Posterior cingulate gyrus (tissue), 11 donors: ENCODE measurements at regions of chr1 and their contacts with region 1.

Region 1: DNA sequence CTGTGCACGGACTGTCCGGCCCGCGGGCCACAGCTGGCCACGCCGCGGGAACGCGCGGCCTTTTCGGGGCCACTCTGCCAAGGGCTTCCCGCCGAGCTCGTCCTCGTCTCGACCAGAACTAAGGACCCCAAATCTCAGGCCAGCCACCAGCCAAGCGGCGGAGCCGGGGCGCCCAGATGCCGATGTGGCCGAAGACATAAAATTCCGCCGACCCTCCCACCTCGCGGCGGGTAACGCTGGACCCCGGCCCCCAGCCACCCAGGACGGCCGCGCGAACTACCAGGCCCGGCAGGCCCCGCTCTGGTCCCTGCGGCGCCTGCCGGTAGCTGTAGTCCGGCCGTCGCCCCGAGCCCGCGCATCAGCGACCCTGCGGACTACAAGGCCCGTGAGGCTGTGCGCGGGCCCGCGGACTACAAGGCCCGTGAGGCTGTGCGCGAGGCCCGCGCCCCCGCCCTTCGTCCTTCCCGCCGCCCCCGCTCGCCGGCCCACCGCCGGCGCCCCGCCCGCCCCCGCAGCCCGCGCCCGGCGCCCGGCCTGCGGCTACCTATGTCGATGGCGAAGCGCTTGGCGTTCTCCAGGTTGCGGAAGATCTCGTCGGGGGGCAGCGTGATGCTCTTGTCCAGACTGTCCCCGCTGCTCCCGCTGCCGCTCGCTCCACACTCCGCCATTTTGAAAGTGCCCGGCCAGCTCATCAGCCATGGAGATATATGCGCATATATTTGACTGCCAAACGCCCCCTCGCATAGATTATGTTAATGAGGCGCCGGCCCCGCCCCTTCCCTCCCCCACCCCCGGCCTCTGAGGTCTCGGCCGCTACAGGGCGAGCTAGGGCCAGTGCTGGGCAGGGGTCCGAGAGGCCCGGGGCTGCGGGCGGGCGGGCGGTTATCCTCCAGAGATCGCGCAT is at the start of gene PANK4:
- DNase-seq: peak; percentile 84 to 99 (median 91)

Region 2: DNA sequence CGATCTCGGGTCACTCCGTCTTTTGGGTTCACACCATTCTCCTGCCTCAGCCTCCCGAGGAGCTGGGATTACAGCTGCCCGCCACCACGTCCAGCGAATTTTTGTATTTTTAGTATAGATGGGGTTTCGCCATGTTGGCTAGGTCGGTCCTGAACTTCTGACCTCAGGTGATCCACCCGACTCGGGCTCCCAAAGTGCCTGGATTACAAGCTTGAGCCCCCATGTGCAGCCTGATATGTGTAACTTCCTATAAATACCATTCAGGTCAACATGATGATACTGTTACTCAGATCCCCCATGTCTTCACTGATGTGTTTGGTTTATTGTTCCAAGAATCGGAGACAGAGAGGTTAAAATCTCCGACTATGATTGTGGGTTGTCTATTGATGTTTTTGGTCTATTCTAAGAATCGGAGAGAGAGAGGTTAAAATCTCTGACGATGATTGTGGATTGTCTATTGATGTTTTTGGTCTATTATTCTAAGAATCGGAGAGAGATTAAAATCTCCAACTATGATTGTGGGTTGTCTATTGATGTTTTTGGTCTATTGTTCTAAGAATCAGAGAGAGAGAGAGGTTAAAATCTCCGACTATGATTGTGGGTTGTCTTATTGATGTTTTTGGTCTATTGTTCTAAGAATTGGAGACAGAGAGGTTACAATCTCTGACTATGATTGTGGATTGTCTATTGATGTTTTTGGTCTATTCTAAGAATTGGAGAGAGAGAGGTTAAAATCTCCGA is 1427.3 kb before region 1 on chr1:
- intact Hi-C with region 1: no loop called
- DNase-seq: peak in 2 of 10 donors; percentile 17 to 27

Region 3: DNA sequence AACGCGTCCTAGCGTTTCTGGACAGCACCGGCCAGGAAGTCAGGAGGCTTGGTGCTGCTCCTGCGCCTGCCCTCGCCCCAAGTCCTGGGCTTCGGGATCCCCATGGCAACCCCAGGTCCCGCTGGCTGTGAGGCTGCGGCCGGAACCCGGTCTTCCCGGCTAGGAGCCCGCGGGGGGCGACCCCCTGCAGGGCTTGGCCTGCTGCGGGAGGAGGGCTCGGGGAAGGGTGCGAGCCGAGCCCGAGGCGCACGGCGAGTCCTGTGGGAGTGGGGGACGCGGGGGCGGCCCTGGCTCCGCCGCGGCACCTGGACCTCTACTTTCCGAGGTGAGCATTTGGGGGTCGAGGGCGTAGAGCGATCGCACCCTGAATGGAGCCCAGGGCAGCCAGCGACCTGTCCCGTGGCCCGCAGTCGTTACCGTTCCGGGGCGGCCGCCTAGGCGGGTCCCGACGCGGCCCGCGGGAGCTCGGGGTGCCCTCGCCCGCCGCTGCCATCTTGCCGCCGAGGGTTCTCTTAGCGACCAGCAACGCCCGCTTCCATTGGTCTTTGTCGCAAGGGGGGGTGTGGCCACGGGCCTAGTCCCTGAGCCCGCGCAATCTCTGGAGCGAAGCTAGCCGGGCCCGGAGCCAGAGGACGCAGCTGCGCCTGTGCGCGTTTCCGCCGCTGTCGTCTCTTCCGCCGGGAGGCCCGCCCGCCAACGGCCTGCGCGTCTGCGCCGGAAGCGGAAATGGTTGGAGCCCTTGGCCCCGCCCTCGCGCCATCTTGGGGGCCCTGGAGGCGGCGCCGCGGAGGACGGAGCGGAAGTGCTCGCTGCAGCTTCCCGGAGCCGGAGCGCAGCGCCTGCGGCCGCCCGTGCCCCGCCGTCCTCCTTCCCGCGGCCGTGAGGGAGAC is 134.9 kb before region 1 on chr1 and contains the starts of genes MORN1 and RER1:
- intact Hi-C with region 1: loop called (anchors 1 kb)
- DNase-seq: peak; percentile 98 to 100 (median 99)

Region 4: GRCh38 chr1:2412519-2413233 is 113.5 kb before region 1 on chr1 and contains the start of gene PEX10:
- intact Hi-C with region 1: loop called (anchors 5 kb)
- DNase-seq: peak; percentile 93 to 100 (median 96)

Region 5: DNA sequence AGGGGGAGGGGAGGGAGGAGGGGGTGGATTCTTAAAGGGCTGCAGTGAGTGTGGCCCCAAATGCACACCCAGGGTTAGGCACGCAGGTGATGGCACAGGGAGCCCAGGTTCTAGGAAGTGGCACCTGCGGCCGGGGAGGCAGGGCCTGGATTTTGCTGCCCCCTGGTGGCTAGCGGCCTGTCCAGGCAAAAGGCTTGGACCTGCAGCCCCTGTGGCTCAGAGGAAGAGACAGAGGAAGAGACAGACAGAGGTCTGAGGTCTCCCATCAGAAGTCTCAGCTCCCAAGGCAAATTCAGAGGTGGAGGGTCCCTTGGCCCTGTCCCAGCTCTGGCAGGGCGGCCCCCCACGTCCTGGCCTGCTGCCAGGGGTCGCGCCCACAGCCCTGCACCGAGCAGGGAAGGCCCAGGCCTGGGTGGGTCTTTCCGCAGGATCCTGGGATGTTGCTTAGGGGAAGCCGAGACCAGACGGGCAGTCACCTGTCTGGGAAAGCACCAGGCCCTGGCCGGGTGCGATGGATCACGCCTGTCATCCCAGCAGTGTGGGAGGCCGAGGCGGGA is 21.9 kb after region 1 on chr1:
- intact Hi-C with region 1: loop called (anchors 2 kb)
- DNase-seq: peak; percentile 72 to 97 (median 84)

Region 6: DNA sequence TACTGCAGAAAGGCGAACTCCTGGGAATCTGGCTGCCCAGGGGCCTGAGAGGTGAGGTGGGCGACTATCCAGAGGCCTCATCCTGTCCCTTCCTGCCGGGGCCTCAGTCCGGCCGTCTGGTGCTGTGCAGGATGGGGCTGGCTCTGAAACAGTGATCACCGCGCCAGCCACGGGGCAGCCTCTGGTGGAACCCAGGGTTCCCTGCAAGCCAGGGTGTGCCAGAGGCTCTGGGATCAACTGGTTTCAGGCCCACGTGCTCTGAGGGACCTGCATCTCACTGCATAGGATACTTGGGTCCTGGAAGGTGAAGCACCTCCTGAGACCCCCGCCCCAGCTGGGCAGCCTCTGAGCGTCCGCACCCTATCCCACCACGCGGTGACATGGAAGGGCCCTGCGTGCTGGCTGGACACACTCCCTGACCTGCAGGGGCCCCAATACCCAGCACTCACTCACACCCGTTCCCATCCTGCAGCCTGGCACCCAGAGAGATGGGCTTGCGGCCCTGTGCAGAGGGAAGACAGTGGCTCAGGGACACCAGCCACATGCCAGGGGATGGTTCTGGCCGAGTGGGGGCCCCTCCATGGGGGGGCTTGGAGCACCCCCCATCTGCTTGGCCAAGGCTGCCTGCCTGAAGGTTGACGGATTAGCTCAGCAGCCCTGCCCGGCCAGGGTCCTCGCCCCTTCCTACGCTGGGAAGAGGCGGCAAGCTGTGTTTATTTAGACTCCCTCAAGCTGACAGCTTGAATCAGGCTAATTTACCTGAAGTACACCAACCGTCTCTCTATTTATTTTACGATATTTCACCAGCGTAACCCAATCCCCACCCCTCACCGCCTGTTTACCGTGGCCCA is 339.6 kb after region 1 on chr1:
- intact Hi-C with region 1: no loop called
- DNase-seq: peak in 1 of 10 donors; percentile 78